ENCODE measurements at regions of chr1 and their contacts with region 1.

Region 1: DNA sequence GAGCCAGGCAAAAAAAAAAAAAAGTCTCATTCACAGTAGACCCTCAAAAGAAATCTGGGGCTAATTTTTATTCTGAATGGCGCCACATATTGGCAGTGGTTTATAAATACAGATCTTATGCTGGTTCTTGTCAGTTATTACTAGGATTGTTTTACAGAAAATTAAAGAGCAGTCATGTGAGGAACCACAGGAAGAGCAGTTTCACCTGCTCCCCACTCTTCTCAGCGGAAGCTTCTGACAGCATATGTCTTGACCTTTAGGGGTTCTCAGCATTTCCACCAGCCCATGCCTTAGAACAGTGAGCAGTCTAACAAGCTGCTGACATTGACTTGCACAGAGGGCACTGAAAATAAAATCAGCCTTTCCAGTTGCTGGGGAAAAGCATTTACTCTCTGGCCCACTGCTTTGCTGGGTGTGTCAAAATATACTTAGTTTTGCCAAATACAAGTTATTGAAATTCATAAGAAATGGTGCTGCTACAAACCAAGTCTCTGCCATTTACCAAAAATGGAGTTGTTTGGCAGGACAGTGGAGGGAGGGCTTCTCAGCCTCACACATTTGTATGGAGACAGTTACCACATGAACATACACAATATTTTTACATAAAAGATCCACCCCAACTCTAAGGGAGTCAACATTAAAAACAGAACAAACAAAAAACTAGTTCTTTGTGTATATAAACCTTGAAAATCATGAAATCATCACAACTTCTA is 144.2 kb downstream of the SYT2 start:
- DNase-seq: no peak
- ATAC-seq: no peak
- H3K4me3 ChIP-seq: no peak overlapping the region
- H3K27ac ChIP-seq: no peak overlapping the region
- H3K4me1 ChIP-seq: no peaks in the 10 kb centered on the region
- H3K27me3 ChIP-seq: no peaks in the 10 kb centered on the region
- CTCF ChIP-seq: peak in 1 of 3 experiments; percentile 31; a peak in 2 of 6 replicates
- EP300 ChIP-seq: no peak
- POLR2A ChIP-seq: no peak
- RAD21 ChIP-seq: peak in 1 of 2 experiments; percentile 20; a peak in 1 of 4 replicates

Region 2: GRCh38 chr1:202283379-202283844 is 282.6 kb before region 1 on chr1:
- CTCF ChIA-PET with region 1: no interaction called
- POLR2A ChIA-PET with region 1: no interaction called
- in situ Hi-C with region 1: no loop called
- intact Hi-C with region 1: no loop called
- DNase-seq: no peak
- ATAC-seq: no peak
- H3K4me3 ChIP-seq: no peak overlapping the region
- H3K27ac ChIP-seq: no peak overlapping the region
- H3K4me1 ChIP-seq: no peaks in the 10 kb centered on the region
- H3K27me3 ChIP-seq: peaks cover 27 to 65% of the 10 kb centered on the region in 2 experiments
- CTCF ChIP-seq: no peak
- EP300 ChIP-seq: no peak
- POLR2A ChIP-seq: no peak
- RAD21 ChIP-seq: no peak

Region 3: GRCh38 chr1:202516434-202516877 is 49.6 kb before region 1 on chr1:
- CTCF ChIA-PET with region 1: no interaction called
- POLR2A ChIA-PET with region 1: no interaction called
- in situ Hi-C with region 1: no loop called
- intact Hi-C with region 1: loop called (anchors 2 kb)
- DNase-seq: peak in 1 of 4 experiments; percentile 33
- ATAC-seq: peak; percentile 28; the same call in 1 of the 3 replicates
- H3K4me3 ChIP-seq: no peak overlapping the region
- H3K27ac ChIP-seq: no peak overlapping the region
- H3K4me1 ChIP-seq: peaks cover 0 to 6% of the 10 kb centered on the region in 2 experiments; a peak in 2 of 5 replicates
- H3K27me3 ChIP-seq: no peaks in the 10 kb centered on the region
- CTCF ChIP-seq: no peak
- EP300 ChIP-seq: no peak
- POLR2A ChIP-seq: no peak
- RAD21 ChIP-seq: no peak

Region 4: DNA sequence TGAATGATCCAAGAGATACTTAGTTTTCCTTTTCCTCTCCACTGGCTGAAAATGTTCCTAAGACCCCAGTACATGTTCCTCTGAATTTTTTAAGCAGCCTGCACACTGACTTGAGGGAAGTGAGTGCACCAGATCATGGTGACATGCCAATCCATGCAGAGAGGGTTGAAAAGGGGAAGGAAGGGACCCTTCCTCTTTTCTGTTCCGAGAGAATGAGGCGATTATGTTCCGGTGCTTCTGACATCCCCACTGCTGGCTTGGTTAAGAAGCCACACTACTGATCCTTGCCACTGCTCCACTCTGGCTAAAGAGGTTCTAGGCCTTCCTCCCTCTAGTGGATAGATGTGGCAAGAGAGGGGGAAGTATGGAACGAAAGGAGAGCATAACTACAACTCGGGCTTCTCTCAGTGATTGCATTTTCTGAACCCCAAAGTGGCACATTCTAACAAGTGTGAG is 402.8 kb after region 1 on chr1:
- CTCF ChIA-PET with region 1: no interaction called
- POLR2A ChIA-PET with region 1: no interaction called
- in situ Hi-C with region 1: no loop called
- intact Hi-C with region 1: no loop called
- DNase-seq: peak; percentile 74 to 90 (median 81)
- ATAC-seq: peak; percentile 90
- H3K4me3 ChIP-seq: no peak overlapping the region
- H3K27ac ChIP-seq: no peak overlapping the region; the same call in 2 of the 3 replicates
- H3K4me1 ChIP-seq: peaks cover 20 to 24% of the 10 kb centered on the region in 2 experiments
- H3K27me3 ChIP-seq: no peaks in the 10 kb centered on the region; a peak in 1 of 5 replicates
- CTCF ChIP-seq: peak; percentile 94 to 96 (median 95)
- EP300 ChIP-seq: peak; percentile 41; the same call in 1 of the 2 replicates
- POLR2A ChIP-seq: no peak
- RAD21 ChIP-seq: peak; percentile 69 to 80

Measured in K562 (cell line).